Caco-2 (cell line): ENCODE measurements at regions of chr17 and their contacts with region 1.

Region 1: DNA sequence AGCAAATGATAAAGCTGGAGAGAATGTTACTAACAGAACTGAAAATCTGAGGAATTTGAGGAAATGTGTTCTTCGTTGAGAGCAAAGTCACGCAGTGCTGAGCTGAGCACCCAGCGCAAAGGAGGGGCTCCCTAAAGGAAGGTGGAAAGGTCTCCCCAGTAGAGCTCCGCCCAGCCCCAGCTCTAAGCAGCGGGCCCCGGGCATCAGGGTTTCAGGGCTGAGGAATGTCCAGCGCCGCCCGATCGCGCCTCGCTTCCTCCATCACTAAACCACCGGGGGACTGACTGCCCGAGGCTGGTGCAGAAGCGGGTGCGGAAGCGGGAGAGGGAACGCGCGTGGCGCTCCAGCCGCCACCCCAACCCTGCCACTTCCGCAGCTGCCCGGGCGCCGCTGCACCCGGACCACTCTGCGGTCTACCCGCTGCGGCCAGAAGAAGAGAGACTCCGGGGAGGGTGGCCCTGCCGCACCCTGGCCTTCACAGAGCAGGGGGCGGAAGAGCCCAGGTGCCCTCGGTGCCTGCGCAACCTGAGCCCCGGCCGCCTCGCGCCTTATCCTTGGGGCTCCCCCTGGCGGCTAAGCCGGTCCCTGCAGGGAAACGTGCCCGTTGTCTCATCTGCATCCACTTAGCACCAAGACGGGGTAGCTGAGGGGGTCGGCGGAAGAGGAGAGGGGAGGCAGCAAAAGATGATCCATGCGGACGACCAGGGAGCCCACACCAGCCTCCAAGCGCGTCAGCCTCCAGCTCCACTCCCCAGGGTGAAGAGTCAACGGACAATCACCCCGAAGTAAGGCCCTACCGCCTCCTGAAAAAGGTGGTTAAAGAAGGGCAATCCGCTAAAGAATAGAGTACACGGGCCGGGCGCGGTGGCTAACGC is 12.4 kb upstream of the GUCY2D start:
- DNase-seq: peak; percentile 66 to 88
- H3K4me3 ChIP-seq: peak overlapping the region; percentile 57
- H3K4me3 Mint-ChIP-seq: peak overlapping the region; percentile 61
- H3K27ac Mint-ChIP-seq: no peak overlapping the region
- H3K4me1 ChIP-seq: no peaks in the 10 kb centered on the region
- H3K4me1 Mint-ChIP-seq: no peaks in the 10 kb centered on the region
- H3K27me3 ChIP-seq: no peaks in the 10 kb centered on the region
- H3K27me3 Mint-ChIP-seq: no peaks in the 10 kb centered on the region
- CTCF ChIP-seq: peak; percentile 75 to 80

Region 2: GRCh38 chr17:7931709-7932482 is 58.1 kb before region 1 on chr17 and contains the starts of genes CNTROB and TRAPPC1:
- CTCF ChIA-PET with region 1: interaction called, 13 read pairs
- POLR2A ChIA-PET with region 1: no interaction called
- intact Hi-C with region 1: loop called (anchors 5 kb)
- DNase-seq: peak; percentile 95 to 97
- H3K4me3 ChIP-seq: peak within 1 kb of the TSS; percentile 80
- H3K4me3 Mint-ChIP-seq: peak within 1 kb of the TSS; percentile 99
- H3K27ac Mint-ChIP-seq: peak within 1 kb of the TSS; percentile 97
- H3K4me1 ChIP-seq: 0 out of 2 replicates have a peak, but pooled peaks cover 2% of the 10 kb centered on the region
- H3K4me1 Mint-ChIP-seq: peaks cover 11% of the 10 kb centered on the region
- H3K27me3 ChIP-seq: no peaks in the 10 kb centered on the region
- H3K27me3 Mint-ChIP-seq: no peaks in the 10 kb centered on the region
- CTCF ChIP-seq: no peak
- total RNA-seq, gene CNTROB: 22.6 and 24.2 TPM in 2 replicates
- total RNA-seq, gene TRAPPC1: 75.5 and 96.2 TPM in 2 replicates

Region 3: GRCh38 chr17:7969433-7969832 is 20.6 kb before region 1 on chr17:
- CTCF ChIA-PET with region 1: no interaction called
- POLR2A ChIA-PET with region 1: no interaction called
- intact Hi-C with region 1: no loop called
- DNase-seq: no peak
- H3K4me3 ChIP-seq: no peak overlapping the region
- H3K4me3 Mint-ChIP-seq: no peak overlapping the region
- H3K27ac Mint-ChIP-seq: no peak overlapping the region
- H3K4me1 ChIP-seq: no peaks in the 10 kb centered on the region
- H3K4me1 Mint-ChIP-seq: no peaks in the 10 kb centered on the region
- H3K27me3 ChIP-seq: no peaks in the 10 kb centered on the region
- H3K27me3 Mint-ChIP-seq: no peaks in the 10 kb centered on the region
- CTCF ChIP-seq: no peak

Region 4: GRCh38 chr17:8019665-8020064 is 29.6 kb after region 1 on chr17:
- CTCF ChIA-PET with region 1: no interaction called
- POLR2A ChIA-PET with region 1: no interaction called
- intact Hi-C with region 1: no loop called
- DNase-seq: no peak
- H3K4me3 ChIP-seq: no peak overlapping the region
- H3K4me3 Mint-ChIP-seq: no peak overlapping the region
- H3K27ac Mint-ChIP-seq: no peak overlapping the region
- H3K4me1 ChIP-seq: peaks cover 16% of the 10 kb centered on the region
- H3K4me1 Mint-ChIP-seq: peaks cover 13% of the 10 kb centered on the region
- H3K27me3 ChIP-seq: no peaks in the 10 kb centered on the region
- H3K27me3 Mint-ChIP-seq: no peaks in the 10 kb centered on the region
- CTCF ChIP-seq: no peak

Region 5: GRCh38 chr17:8041249-8041928 is 51.4 kb after region 1 on chr17:
- CTCF ChIA-PET with region 1: interaction called, 10 read pairs
- POLR2A ChIA-PET with region 1: no interaction called
- intact Hi-C with region 1: loop called (anchors 1 kb)
- DNase-seq: peak in 1 of 2 experiments; percentile 39
- H3K4me3 ChIP-seq: no peak overlapping the region
- H3K4me3 Mint-ChIP-seq: no peak overlapping the region
- H3K27ac Mint-ChIP-seq: peak overlapping the region; percentile 42
- H3K4me1 ChIP-seq: peaks cover 7% of the 10 kb centered on the region
- H3K4me1 Mint-ChIP-seq: no peaks in the 10 kb centered on the region
- H3K27me3 ChIP-seq: no peaks in the 10 kb centered on the region
- H3K27me3 Mint-ChIP-seq: no peaks in the 10 kb centered on the region
- CTCF ChIP-seq: peak; percentile 25 to 32